Caco-2 (cell line): ENCODE measurements at regions of chr19 and their contacts with region 1.

Region 1: DNA sequence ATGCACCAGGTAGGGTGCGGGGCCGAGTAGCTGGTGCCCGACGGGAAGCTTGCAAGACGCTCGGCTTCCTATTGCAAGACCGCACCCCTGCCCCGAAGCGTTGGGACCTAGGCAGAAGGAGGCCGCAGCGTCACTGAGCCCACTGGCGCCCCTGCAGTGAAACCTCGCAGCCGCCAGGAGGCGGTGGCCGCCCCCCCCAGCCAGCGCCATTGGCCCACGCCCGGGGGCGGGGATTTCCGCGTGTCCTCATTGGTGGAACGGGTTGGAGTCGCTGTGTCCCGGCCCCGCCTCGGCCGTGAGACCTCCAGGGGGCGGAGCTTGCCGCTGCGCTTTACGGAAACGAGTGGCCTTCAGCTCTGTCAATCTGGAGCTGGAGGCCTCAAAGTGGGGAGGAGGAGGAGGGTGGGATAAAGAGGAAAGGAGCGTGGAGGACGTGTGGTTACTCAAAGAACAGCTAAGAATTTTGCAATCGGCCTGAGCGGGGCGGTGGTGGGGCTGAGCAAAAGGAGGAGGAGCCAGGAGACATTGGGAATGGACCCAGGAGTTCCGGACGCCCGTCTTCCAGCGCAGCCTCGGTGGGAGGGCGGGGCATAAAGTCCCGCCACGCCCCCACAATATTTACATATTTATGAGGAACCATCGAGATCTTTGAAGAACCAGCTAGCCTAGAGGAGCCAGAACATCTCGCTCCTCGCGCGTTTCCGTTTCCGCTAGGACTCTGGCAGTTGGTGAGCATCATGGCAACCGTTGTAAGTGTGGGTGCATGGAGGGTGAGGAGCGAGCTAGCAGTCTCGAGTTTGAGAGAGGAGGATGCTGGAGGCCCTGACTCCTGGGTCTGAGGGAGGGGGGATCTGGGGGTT is at the starts of genes GYS1 and RUVBL2:
- DNase-seq: peak; percentile 100
- H3K4me3 ChIP-seq: peak within 1 kb of the TSS; percentile 77
- H3K4me3 Mint-ChIP-seq: peak within 1 kb of the TSS; percentile 99
- H3K27ac Mint-ChIP-seq: peak within 1 kb of the TSS; percentile 97
- H3K4me1 ChIP-seq: peaks cover 13% of the 10 kb centered on the region; the same call in 1 of the 2 replicates
- H3K4me1 Mint-ChIP-seq: peaks cover 25% of the 10 kb centered on the region
- H3K27me3 ChIP-seq: no peaks in the 10 kb centered on the region
- H3K27me3 Mint-ChIP-seq: no peaks in the 10 kb centered on the region
- CTCF ChIP-seq: peak; percentile 98 to 99
- total RNA-seq, gene GYS1: 62.7 and 65.3 TPM in 2 replicates
- total RNA-seq, gene RUVBL2: 165 and 172 TPM in 2 replicates

Region 2: DNA sequence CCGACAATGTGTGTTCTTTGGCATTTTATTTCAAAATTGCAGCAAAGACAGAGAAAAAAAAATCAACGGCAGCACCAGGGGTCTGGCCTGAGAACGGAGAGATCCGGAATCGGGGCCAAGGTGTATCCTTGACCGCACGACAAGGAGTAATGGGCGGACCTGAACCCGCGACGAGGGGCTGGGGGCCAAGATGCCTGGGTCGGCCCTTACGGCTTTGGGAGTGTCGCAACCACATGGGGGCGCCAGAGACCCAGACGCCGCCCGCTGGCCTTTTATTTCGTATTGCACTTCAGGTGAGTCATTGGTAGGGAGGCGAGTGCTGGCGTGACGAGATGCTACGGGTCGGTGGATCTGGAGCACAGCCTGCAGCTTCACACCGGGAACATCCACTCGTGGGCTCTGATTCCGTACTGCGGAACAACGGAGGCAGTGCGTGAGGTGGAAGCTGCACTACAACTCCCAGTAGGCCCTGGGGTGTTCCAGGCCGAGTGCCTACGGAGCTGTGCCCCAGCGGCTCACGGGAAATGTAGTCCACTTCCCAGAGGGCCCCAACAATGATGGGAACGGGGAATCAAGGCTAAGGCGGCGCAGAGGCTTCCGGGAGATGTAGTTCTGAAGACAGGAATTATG is 198.2 kb before region 1 on chr19:
- CTCF ChIA-PET with region 1: interaction called, 10 read pairs
- POLR2A ChIA-PET with region 1: no interaction called
- intact Hi-C with region 1: no loop called
- DNase-seq: peak; percentile 95
- H3K4me3 ChIP-seq: peak overlapping the region; percentile 55
- H3K4me3 Mint-ChIP-seq: peak overlapping the region; percentile 83
- H3K27ac Mint-ChIP-seq: peak overlapping the region; percentile 79
- H3K4me1 ChIP-seq: peaks cover 8% of the 10 kb centered on the region
- H3K4me1 Mint-ChIP-seq: peaks cover 13% of the 10 kb centered on the region
- H3K27me3 ChIP-seq: no peaks in the 10 kb centered on the region
- H3K27me3 Mint-ChIP-seq: no peaks in the 10 kb centered on the region
- CTCF ChIP-seq: peak; percentile 94 to 95

Region 3: DNA sequence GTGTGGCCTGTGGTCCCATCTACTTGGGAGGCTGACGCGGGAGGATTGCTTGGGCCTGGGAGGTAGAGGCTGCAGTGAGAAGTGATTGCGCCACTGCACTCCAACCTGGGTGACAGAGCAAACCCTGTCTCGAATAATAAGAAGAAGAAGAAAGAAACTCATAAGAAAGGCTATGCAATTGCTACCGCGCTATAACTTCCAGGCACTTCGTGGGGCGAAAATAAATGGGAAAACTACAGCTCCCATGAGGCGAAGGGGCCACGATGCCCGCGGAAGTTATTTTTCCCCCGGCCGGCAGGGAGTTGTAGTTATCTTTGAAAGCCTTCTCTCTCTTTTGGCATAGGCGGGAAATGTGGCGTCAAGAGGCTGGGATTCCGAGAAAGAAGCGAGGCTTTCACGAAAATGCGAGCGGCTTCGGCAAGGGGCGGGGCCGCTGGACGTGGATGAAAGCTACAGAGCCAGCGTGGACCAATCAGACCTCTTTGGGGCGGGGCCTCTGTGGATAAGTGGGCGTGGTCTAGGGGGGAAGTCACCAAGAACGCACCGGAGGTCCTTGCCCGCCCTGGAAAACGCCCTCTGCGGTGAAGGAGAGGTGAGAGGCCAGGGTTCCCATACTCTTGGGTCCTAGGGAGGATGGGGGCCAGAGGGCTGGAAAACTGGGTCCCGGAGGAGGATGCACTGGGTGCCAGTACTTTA is 93.5 kb before region 1 on chr19 and contains the start of gene NUCB1:
- CTCF ChIA-PET with region 1: interaction called, 5 read pairs
- POLR2A ChIA-PET with region 1: interaction called, 12 read pairs
- intact Hi-C with region 1: no loop called
- DNase-seq: peak; percentile 100
- H3K4me3 ChIP-seq: peak within 1 kb of the TSS; percentile 76
- H3K4me3 Mint-ChIP-seq: peak within 1 kb of the TSS; percentile 92
- H3K27ac Mint-ChIP-seq: peak within 1 kb of the TSS; percentile 89
- H3K4me1 ChIP-seq: 0 out of 2 replicates have a peak, but pooled peaks cover 13% of the 10 kb centered on the region
- H3K4me1 Mint-ChIP-seq: peaks cover 13% of the 10 kb centered on the region
- H3K27me3 ChIP-seq: no peaks in the 10 kb centered on the region
- H3K27me3 Mint-ChIP-seq: no peaks in the 10 kb centered on the region
- CTCF ChIP-seq: peak in 1 of 2 experiments; percentile 38
- total RNA-seq, gene NUCB1: 140 and 142 TPM in 2 replicates

Region 4: GRCh38 chr19:48975947-48976847 is 17.2 kb before region 1 on chr19:
- CTCF ChIA-PET with region 1: interaction called, 18 read pairs
- POLR2A ChIA-PET with region 1: interaction called, 8 read pairs
- intact Hi-C with region 1: no loop called
- DNase-seq: peak; percentile 59 to 61
- H3K4me3 ChIP-seq: no peak overlapping the region
- H3K4me3 Mint-ChIP-seq: no peak overlapping the region
- H3K27ac Mint-ChIP-seq: no peak overlapping the region
- H3K4me1 ChIP-seq: no peaks in the 10 kb centered on the region
- H3K4me1 Mint-ChIP-seq: no peaks in the 10 kb centered on the region
- H3K27me3 ChIP-seq: no peaks in the 10 kb centered on the region
- H3K27me3 Mint-ChIP-seq: no peaks in the 10 kb centered on the region
- CTCF ChIP-seq: peak in 1 of 2 experiments; percentile 39

Region 5: DNA sequence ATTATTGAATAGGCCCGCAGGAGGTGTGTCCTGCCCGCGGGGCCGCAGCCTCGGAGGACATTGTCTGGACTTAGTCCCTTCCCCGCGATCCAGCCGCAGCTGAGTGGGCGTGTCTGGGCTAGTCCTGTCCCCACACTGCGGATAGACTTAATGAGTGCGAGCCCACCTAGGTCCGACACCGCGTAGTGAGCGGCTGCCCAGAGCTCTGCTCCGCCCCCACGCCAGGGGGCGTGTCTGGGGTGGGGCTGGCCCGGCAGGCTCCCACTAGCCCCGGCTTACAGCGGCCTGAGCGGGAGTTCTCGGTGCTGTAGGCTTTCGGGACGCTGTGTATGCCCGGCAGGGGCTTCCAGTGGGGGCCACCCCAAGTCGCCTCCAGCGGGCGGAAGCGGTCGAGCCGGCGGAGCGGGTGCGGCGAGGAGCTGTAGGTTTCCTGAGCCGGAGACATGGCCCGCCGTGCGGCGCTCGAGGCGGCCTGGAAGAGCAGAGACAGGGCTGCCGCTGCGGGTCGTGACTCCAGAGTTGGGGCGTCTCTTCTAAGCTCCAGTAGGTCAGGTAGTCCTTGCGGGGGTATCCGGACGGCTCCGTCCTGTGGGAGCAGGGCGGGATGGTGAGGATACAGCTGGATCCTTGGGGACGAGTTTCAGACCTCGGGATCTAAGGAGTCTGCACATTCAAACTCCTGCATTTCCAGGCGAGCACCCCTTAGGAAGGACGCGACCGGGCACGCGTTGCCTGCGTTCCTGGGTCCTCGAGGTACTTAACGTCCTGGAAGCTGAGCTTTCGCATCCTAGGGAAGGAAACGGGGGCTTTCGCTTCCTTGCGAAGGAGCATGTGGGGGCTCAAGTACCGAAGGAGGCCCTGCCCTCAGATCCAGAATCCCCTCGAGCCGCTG is 62.9 kb after region 1 on chr19:
- CTCF ChIA-PET with region 1: interaction called, 6 read pairs
- POLR2A ChIA-PET with region 1: interaction called, 9 read pairs
- intact Hi-C with region 1: loop called (anchors 2 kb)
- DNase-seq: peak; percentile 70 to 83
- H3K4me3 ChIP-seq: peak overlapping the region; percentile 51
- H3K4me3 Mint-ChIP-seq: peak overlapping the region; percentile 73
- H3K27ac Mint-ChIP-seq: no peak overlapping the region
- H3K4me1 ChIP-seq: no peaks in the 10 kb centered on the region
- H3K4me1 Mint-ChIP-seq: peaks cover 8% of the 10 kb centered on the region
- H3K27me3 ChIP-seq: no peaks in the 10 kb centered on the region
- H3K27me3 Mint-ChIP-seq: peaks cover 9% of the 10 kb centered on the region
- CTCF ChIP-seq: peak; percentile 42 to 58

Region 6: DNA sequence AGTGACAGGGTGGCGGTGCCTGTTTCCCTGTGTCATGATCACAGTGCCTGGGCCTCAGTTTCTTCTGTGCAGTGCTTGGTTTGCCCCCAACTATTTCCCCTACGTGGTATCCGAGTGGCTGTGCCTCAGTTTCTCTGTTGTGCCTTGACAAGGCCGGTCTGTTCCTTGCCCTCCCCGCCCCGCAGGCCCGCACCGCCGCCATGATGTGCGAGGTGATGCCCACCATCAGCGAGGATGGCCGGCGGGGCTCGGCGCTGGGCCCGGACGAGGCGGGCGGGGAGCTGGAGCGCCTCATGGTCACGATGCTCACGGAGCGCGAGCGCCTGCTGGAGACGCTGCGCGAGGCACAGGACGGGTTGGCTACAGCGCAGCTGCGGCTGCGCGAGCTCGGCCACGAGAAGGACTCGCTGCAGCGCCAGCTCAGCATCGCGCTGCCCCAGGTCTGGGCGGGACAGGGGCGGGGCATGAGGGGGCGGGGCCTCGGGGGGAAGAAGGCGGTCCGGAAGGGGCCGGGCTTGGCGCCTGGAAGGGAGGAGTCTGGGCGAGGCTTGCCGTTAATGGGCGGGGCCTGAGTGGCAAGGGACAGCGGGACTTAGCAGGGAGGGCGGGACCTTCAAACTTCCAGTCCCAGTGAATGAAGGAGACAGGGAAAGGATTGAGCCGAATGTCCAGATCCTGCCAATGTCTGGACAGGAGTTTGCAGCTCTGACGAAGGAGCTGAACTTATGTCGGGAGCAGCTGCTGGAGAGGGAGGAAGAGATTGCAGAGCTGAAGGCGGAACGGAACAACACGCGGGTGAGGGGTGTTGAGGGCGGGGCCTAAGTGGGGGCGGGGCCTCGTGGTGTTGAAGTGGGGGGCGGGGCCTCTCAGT is 134.5 kb after region 1 on chr19:
- CTCF ChIA-PET with region 1: interaction called, 11 read pairs
- POLR2A ChIA-PET with region 1: interaction called, 10 read pairs
- intact Hi-C with region 1: no loop called
- DNase-seq: peak; percentile 98
- H3K4me3 ChIP-seq: peak overlapping the region; percentile 46
- H3K4me3 Mint-ChIP-seq: peak overlapping the region; percentile 85
- H3K27ac Mint-ChIP-seq: peak overlapping the region; percentile 80
- H3K4me1 ChIP-seq: peaks cover 17% of the 10 kb centered on the region; the same call in 1 of the 2 replicates
- H3K4me1 Mint-ChIP-seq: peaks cover 26% of the 10 kb centered on the region
- H3K27me3 ChIP-seq: no peaks in the 10 kb centered on the region
- H3K27me3 Mint-ChIP-seq: no peaks in the 10 kb centered on the region
- CTCF ChIP-seq: peak in 1 of 2 experiments; percentile 16